B cell (primary cell): ENCODE measurements at regions of chr10 and their contacts with region 1.

Region 1: GRCh38 chr10:30591249-30591670 is 38.3 kb downstream of the LYZL2 start:
- DNase-seq: peak; percentile 76
- ATAC-seq: peak; percentile 56
- H3K4me3 ChIP-seq: no peak overlapping the region
- H3K4me3 Mint-ChIP-seq: no peak overlapping the region
- H3K27ac ChIP-seq: no peak overlapping the region
- H3K27ac Mint-ChIP-seq: no peak overlapping the region
- H3K4me1 ChIP-seq: peaks cover 14 to 15% of the 10 kb centered on the region in 2 donors
- H3K4me1 Mint-ChIP-seq: peaks cover 17% of the 10 kb centered on the region
- H3K27me3 ChIP-seq: peaks cover 0 to 3% (median 0%) of the 10 kb centered on the region in 4 experiments
- H3K27me3 Mint-ChIP-seq: peaks cover 15% of the 10 kb centered on the region
- CTCF ChIP-seq: peak; percentile 83

Region 2: DNA sequence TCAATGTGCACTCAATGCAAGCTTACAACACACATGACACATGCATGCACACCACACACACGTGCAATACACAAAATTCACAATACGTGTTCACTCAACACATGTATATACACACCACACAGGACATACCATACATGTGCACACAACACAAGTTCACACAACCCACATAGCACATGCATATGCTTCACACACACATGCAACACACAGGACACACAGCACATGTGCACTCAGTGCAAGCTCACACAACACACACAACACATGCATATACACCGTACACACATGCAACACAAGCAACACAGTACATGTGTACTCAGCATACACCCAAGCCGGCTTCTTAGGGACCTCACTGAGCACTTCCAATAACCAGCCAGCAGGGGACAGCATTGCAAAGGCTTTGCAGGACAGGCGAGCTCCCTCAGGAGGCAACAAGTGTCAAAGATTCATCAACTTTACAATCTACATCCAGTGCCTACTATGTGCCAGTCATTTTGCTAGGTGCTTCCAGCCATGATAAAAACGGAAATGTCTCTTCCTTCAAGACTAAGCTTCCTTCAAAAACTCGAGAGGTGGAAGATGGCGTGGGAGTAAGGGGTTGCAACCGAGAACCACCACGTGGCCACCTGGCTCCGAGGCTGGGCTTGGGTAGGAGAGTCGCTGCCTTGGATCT is 593.0 kb before region 1 on chr10:
- CTCF ChIA-PET with region 1: interaction called, 15 read pairs
- POLR2A ChIA-PET with region 1: no interaction called
- intact Hi-C with region 1: no loop called
- DNase-seq: peak; percentile 70
- ATAC-seq: peak; percentile 70
- H3K4me3 ChIP-seq: no peak overlapping the region
- H3K4me3 Mint-ChIP-seq: no peak overlapping the region
- H3K27ac ChIP-seq: no peak overlapping the region
- H3K27ac Mint-ChIP-seq: no peak overlapping the region
- H3K4me1 ChIP-seq: no peaks in the 10 kb centered on the region
- H3K4me1 Mint-ChIP-seq: peaks cover 3% of the 10 kb centered on the region
- H3K27me3 ChIP-seq: peaks cover 0 to 10% (median 1%) of the 10 kb centered on the region in 4 experiments
- H3K27me3 Mint-ChIP-seq: peaks cover 36% of the 10 kb centered on the region
- CTCF ChIP-seq: peak; percentile 84

Region 3: GRCh38 chr10:30384701-30385201 is 206.5 kb before region 1 on chr10:
- CTCF ChIA-PET with region 1: interaction called, 258 read pairs
- POLR2A ChIA-PET with region 1: no interaction called
- intact Hi-C with region 1: no loop called
- DNase-seq: peak; percentile 21
- ATAC-seq: no peak
- H3K4me3 ChIP-seq: no peak overlapping the region
- H3K4me3 Mint-ChIP-seq: no peak overlapping the region
- H3K27ac ChIP-seq: no peak overlapping the region
- H3K27ac Mint-ChIP-seq: no peak overlapping the region
- H3K4me1 ChIP-seq: no peaks in the 10 kb centered on the region
- H3K4me1 Mint-ChIP-seq: no peaks in the 10 kb centered on the region
- H3K27me3 ChIP-seq: peaks cover 0 to 3% (median 0%) of the 10 kb centered on the region in 4 experiments
- H3K27me3 Mint-ChIP-seq: peaks cover 8% of the 10 kb centered on the region
- CTCF ChIP-seq: peak; percentile 58

Region 4: DNA sequence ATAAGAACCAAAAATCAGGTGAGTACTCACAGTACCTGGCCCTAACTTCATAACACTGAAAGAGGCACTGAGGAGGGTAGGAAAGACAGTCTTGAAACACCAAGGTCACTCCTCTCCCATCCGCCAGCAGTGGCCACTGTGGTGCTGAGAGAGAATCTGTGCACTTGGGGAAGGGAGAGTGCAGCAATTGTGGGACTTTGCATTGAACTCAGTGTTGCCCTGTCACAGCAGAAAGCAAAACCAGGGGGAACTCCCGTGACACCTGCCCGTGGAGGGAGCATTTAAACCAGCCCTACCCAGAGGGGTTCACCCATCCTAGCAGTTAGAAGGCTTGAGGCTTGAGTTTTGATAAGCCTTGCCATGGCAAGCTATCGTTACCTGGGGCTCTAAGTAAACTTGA is 192.5 kb before region 1 on chr10:
- CTCF ChIA-PET with region 1: interaction called, 258 read pairs
- POLR2A ChIA-PET with region 1: no interaction called
- intact Hi-C with region 1: no loop called
- DNase-seq: no peak
- ATAC-seq: no peak
- H3K4me3 ChIP-seq: no peak overlapping the region
- H3K4me3 Mint-ChIP-seq: no peak overlapping the region
- H3K27ac ChIP-seq: no peak overlapping the region
- H3K27ac Mint-ChIP-seq: no peak overlapping the region
- H3K4me1 ChIP-seq: no peaks in the 10 kb centered on the region
- H3K4me1 Mint-ChIP-seq: no peaks in the 10 kb centered on the region
- H3K27me3 ChIP-seq: no peaks in the 10 kb centered on the region
- H3K27me3 Mint-ChIP-seq: peaks cover 10% of the 10 kb centered on the region
- CTCF ChIP-seq: no peak

Region 5: GRCh38 chr10:30433730-30434272 is 157.5 kb before region 1 on chr10 and contains the start of gene MAP3K8:
- CTCF ChIA-PET with region 1: interaction called, 15 read pairs
- POLR2A ChIA-PET with region 1: no interaction called
- intact Hi-C with region 1: no loop called
- DNase-seq: peak; percentile 96
- ATAC-seq: peak; percentile 73
- H3K4me3 ChIP-seq: peak within 1 kb of the TSS; percentile 93 to 99 (median 97)
- H3K4me3 Mint-ChIP-seq: peak within 1 kb of the TSS; percentile 98
- H3K27ac ChIP-seq: peak within 1 kb of the TSS; percentile 95 to 99
- H3K27ac Mint-ChIP-seq: peak within 1 kb of the TSS; percentile 97
- H3K4me1 ChIP-seq: peaks cover 56 to 74% of the 10 kb centered on the region in 2 donors
- H3K4me1 Mint-ChIP-seq: peaks cover 71% of the 10 kb centered on the region
- H3K27me3 ChIP-seq: no peaks in the 10 kb centered on the region
- H3K27me3 Mint-ChIP-seq: no peaks in the 10 kb centered on the region
- CTCF ChIP-seq: no peak
- total RNA-seq, gene MAP3K8: 97.0 and 104 TPM in 2 replicates

Region 6: GRCh38 chr10:30542001-30542894 is 49.0 kb before region 1 on chr10:
- CTCF ChIA-PET with region 1: interaction called, 22 read pairs
- POLR2A ChIA-PET with region 1: no interaction called
- intact Hi-C with region 1: no loop called
- DNase-seq: no peak
- ATAC-seq: no peak
- H3K4me3 ChIP-seq: no peak overlapping the region
- H3K4me3 Mint-ChIP-seq: no peak overlapping the region
- H3K27ac ChIP-seq: no peak overlapping the region
- H3K27ac Mint-ChIP-seq: no peak overlapping the region
- H3K4me1 ChIP-seq: no peaks in the 10 kb centered on the region
- H3K4me1 Mint-ChIP-seq: peaks cover 9% of the 10 kb centered on the region
- H3K27me3 ChIP-seq: no peaks in the 10 kb centered on the region
- H3K27me3 Mint-ChIP-seq: no peaks in the 10 kb centered on the region
- CTCF ChIP-seq: no peak

Region 7: GRCh38 chr10:30742471-30742870 is 151.2 kb after region 1 on chr10:
- CTCF ChIA-PET with region 1: no interaction called
- POLR2A ChIA-PET with region 1: no interaction called
- intact Hi-C with region 1: no loop called
- DNase-seq: no peak
- ATAC-seq: peak; percentile 36
- H3K4me3 ChIP-seq: no peak overlapping the region
- H3K4me3 Mint-ChIP-seq: no peak overlapping the region
- H3K27ac ChIP-seq: no peak overlapping the region
- H3K27ac Mint-ChIP-seq: peak overlapping the region; percentile 27
- H3K4me1 ChIP-seq: no peaks in the 10 kb centered on the region
- H3K4me1 Mint-ChIP-seq: peaks cover 11% of the 10 kb centered on the region
- H3K27me3 ChIP-seq: no peaks in the 10 kb centered on the region
- H3K27me3 Mint-ChIP-seq: peaks cover 5% of the 10 kb centered on the region
- CTCF ChIP-seq: no peak